ENCODE measurements at regions of chr4 and their contacts with region 1.

Region 1: DNA sequence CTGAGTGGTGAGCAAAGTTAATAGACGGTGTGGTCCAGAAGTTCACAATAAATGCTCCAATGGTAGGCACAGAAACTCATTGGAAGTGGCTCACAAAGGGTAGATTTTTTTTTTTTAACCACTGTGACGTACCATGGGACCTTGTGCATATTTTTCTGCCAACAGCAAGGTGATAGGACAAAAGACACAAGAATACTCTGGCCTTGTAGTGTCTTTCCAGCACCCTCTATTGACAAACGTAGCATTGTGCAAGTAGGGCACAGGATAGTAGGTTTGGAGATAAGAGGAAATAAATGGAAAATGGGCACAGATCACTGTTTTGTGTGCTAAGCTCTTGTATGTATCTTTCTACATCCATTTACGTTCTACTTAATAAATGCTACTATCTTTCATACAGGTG is 2054.9 kb downstream of the PCDH7 start:
- DNase-seq: peak; percentile 65
- H3K4me3 Mint-ChIP-seq: no peak overlapping the region
- H3K27ac Mint-ChIP-seq: no peak overlapping the region
- H3K4me1 Mint-ChIP-seq: peaks cover 12% of the 10 kb centered on the region
- H3K27me3 Mint-ChIP-seq: no peaks in the 10 kb centered on the region
- CTCF ChIP-seq: peak; percentile 41

Region 2: DNA sequence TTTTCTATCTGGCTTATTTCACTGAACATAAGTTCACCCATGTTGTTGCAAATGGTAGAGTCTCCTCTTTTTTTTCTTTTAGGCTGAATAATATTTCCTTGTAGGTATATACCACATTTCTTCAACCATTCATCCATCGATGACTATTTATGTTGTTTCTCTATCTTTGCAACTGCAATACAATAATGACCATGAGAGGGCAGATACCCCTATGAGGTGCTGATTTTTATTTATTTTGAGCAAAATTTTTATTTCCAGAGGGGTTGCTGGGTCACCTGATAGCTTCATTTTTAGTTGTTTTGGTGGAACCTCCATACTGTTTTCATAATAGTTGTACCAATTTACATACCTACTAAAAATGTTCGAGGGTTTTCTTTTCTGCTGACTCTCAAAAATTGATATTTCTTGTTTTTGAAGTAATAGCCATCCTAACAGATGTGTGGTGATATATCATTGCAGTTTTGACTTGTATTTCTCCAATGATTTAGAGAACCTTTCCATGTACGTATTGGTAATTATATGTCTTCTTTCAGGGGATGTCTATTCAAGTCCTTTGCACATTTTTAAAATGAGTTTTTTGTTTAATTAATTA is 357.8 kb before region 1 on chr4:
- CTCF ChIA-PET with region 1: no interaction called
- POLR2A ChIA-PET with region 1: no interaction called
- intact Hi-C with region 1: loop called (anchors 5 kb)
- DNase-seq: no peak
- H3K4me3 Mint-ChIP-seq: no peak overlapping the region
- H3K27ac Mint-ChIP-seq: no peak overlapping the region
- H3K4me1 Mint-ChIP-seq: no peaks in the 10 kb centered on the region
- H3K27me3 Mint-ChIP-seq: no peaks in the 10 kb centered on the region
- CTCF ChIP-seq: peak; percentile 21